ENCODE measurements at regions of chr17 and their contacts with region 1.

Region 1: DNA sequence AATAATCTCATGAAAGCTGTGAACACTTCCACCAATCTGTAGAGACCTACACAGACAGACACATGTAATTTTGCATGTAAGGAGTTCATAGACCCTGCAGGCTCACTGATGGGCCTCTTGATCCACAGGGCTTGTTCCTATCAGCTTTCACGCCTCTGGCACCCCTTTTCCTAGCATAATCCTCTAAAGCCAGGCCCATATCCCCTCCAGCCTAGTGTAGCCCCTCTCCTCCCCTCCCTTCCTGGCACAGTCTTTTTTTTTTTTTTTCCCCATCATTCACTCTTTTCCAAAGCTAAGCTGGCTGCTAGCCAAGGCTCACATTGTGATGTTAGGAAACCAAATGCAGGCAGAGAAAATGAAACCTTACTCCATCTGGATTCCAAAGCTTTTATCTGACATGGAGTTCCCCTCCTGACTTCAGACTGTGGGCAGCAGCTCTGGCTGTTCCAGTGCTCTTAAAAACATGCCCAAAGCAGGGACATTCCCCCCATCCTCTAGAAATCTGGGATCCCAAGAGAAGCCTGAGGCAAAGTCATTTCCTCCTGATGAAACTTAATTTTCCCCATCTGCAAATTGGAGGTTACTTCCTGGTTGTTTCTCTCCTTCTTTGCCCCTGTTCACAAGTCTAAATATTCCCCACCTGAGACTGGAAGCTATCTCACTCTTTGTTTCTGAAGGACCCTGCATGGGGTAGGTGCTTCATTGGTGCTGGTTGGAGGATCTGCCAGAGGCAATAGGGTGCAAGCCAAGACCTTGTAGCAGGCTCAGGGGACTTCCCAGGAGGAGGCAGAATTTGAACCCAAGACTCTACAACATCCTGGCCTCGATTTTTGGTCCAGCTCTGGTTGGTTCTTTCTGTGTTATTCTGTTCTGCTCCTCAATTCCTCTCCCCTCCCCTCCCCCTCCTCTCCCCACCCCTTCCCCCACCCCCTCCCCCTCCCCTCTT is 9.9 kb upstream of the CCL5 start:
- DNase-seq: peak in 1 of 2 experiments; percentile 18
- H3K4me3 ChIP-seq: no peak overlapping the region
- H3K27ac ChIP-seq: no peak overlapping the region
- H3K4me1 ChIP-seq: no peaks in the 10 kb centered on the region
- H3K27me3 ChIP-seq: no peaks in the 10 kb centered on the region
- CTCF ChIP-seq: no peak

Region 2: DNA sequence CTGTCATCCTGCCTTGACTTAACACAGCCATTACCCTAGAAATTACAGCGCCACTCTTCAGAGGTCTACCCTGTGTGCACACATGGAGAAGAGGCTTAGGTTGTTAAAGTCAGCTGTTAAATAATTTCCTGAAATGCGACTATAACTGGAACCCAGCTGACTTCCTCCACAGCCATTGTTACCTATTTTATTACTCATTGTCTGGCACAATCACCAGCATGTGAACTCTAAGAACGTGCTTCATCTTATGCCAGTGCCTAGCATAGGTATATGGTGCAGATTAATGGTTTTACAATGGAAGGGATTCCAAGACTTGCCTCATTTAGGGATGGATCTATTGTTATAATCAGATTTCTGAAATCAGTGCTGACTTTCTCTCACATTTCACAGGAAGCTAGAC is 28.6 kb after region 1 on chr17:
- CTCF ChIA-PET with region 1: no interaction called
- POLR2A ChIA-PET with region 1: interaction called, 17 read pairs
- intact Hi-C with region 1: no loop called
- DNase-seq: no peak
- H3K4me3 ChIP-seq: no peak overlapping the region
- H3K27ac ChIP-seq: no peak overlapping the region
- H3K4me1 ChIP-seq: no peaks in the 10 kb centered on the region
- H3K27me3 ChIP-seq: peaks cover 12% of the 10 kb centered on the region; the same call in 1 of the 2 replicates
- CTCF ChIP-seq: no peak

Measured in PC-9 (cell line).